Left cardiac atrium (tissue), 4 donors: ENCODE measurements at regions of chr3 and their contacts with region 1.

Region 1: GRCh38 chr3:25856902-25857518 is 67.1 kb downstream of the OXSM start:
- DNase-seq: no peak
- ATAC-seq: peak in 1 of 2 donors; percentile 43

Region 2: GRCh38 chr3:25648107-25648535 is 208.9 kb before region 1 on chr3:
- intact Hi-C with region 1: loop called in 1 of 2 experiments (anchors 5 kb)
- DNase-seq: peak; percentile 45
- ATAC-seq: peak; percentile 65 to 85